PC-3 (cell line): ENCODE measurements at regions of chr18 and their contacts with region 1.

Region 1: GRCh38 chr18:63936156-63936931 is 12.8 kb upstream of the HMSD start:
- DNase-seq: peak; percentile 74
- ATAC-seq: peak; percentile 99
- H3K4me3 ChIP-seq: peak overlapping the region; percentile 82
- H3K27ac ChIP-seq: no peak overlapping the region
- H3K4me1 ChIP-seq: no peaks in the 10 kb centered on the region
- H3K27me3 ChIP-seq: no peaks in the 10 kb centered on the region
- CTCF ChIP-seq: peak; percentile 79

Region 2: GRCh38 chr18:63518178-63519012 is 417.9 kb before region 1 on chr18:
- CTCF ChIA-PET with region 1: no interaction called
- POLR2A ChIA-PET with region 1: no interaction called
- intact Hi-C with region 1: loop called (anchors 2 kb)
- DNase-seq: peak; percentile 91
- ATAC-seq: peak; percentile 97
- H3K4me3 ChIP-seq: no peak overlapping the region
- H3K27ac ChIP-seq: no peak overlapping the region
- H3K4me1 ChIP-seq: peaks cover 8% of the 10 kb centered on the region; the same call in 1 of the 2 replicates
- H3K27me3 ChIP-seq: no peaks in the 10 kb centered on the region
- CTCF ChIP-seq: peak; percentile 76

Region 3: GRCh38 chr18:63887424-63887823 is 48.9 kb before region 1 on chr18 and contains the start of gene SERPINB2:
- CTCF ChIA-PET with region 1: no interaction called
- POLR2A ChIA-PET with region 1: no interaction called
- intact Hi-C with region 1: loop called (anchors 5 kb)
- DNase-seq: peak; percentile 72
- ATAC-seq: peak; percentile 14; the same call in 1 of the 2 replicates
- H3K4me3 ChIP-seq: no peak within 1 kb of the TSS
- H3K27ac ChIP-seq: peak within 1 kb of the TSS; percentile 41
- H3K4me1 ChIP-seq: peaks cover 33% of the 10 kb centered on the region
- H3K27me3 ChIP-seq: no peaks in the 10 kb centered on the region
- CTCF ChIP-seq: no peak
- total RNA-seq, gene SERPINB2: 5.8 and 9.9 TPM in 2 replicates

Region 4: GRCh38 chr18:63979409-63979920 is 43.1 kb after region 1 on chr18:
- CTCF ChIA-PET with region 1: no interaction called
- POLR2A ChIA-PET with region 1: no interaction called
- intact Hi-C with region 1: loop called (anchors 1 kb)
- DNase-seq: peak; percentile 79
- ATAC-seq: peak; percentile 71
- H3K4me3 ChIP-seq: no peak overlapping the region
- H3K27ac ChIP-seq: no peak overlapping the region
- H3K4me1 ChIP-seq: 0 out of 2 replicates have a peak, but pooled peaks cover 3% of the 10 kb centered on the region
- H3K27me3 ChIP-seq: no peaks in the 10 kb centered on the region
- CTCF ChIP-seq: peak; percentile 90